Activated T-helper 1 cell treated with anti-CD3 and anti-CD28 coated beads, Interleukin-12 subunit alpha, Interleukin-12 subunit beta, Interleukin-2, Interleukin-4 antibody, amounts not matched to agents 30 ng/mL and 10 ng/mL and 1 ng/mL, durations not matched to agents 14 hours and 24 hours and 36 hours (primary cell): ENCODE measurements at regions of chr6 and their contacts with region 1.

Region 1: GRCh38 chr6:132530293-132530974 is 7.6 kb upstream of the TAAR9 start:
- DNase-seq: peak; percentile 45
- H3K4me3 Mint-ChIP-seq: no peak overlapping the region
- H3K27ac Mint-ChIP-seq: no peak overlapping the region
- H3K4me1 Mint-ChIP-seq: no peaks in the 10 kb centered on the region
- H3K27me3 Mint-ChIP-seq: peaks cover 29% of the 10 kb centered on the region

Region 2: GRCh38 chr6:132669690-132670291 is 139.4 kb after region 1 on chr6:
- intact Hi-C with region 1: loop called (anchors 5 kb)
- DNase-seq: no peak
- H3K4me3 Mint-ChIP-seq: no peak overlapping the region
- H3K27ac Mint-ChIP-seq: no peak overlapping the region
- H3K4me1 Mint-ChIP-seq: peaks cover 7% of the 10 kb centered on the region
- H3K27me3 Mint-ChIP-seq: peaks cover 5% of the 10 kb centered on the region

Region 3: GRCh38 chr6:132768051-132768517 is 237.7 kb after region 1 on chr6:
- intact Hi-C with region 1: loop called (anchors 1 kb)
- DNase-seq: no peak
- H3K4me3 Mint-ChIP-seq: no peak overlapping the region
- H3K27ac Mint-ChIP-seq: no peak overlapping the region
- H3K4me1 Mint-ChIP-seq: peaks cover 16% of the 10 kb centered on the region
- H3K27me3 Mint-ChIP-seq: no peaks in the 10 kb centered on the region

Region 4: GRCh38 chr6:132798869-132799538 is 268.6 kb after region 1 on chr6:
- intact Hi-C with region 1: loop called (anchors 1 kb)
- DNase-seq: peak; percentile 46
- H3K4me3 Mint-ChIP-seq: no peak overlapping the region
- H3K27ac Mint-ChIP-seq: peak overlapping the region; percentile 80
- H3K4me1 Mint-ChIP-seq: peaks cover 10% of the 10 kb centered on the region
- H3K27me3 Mint-ChIP-seq: peaks cover 8% of the 10 kb centered on the region

Region 5: DNA sequence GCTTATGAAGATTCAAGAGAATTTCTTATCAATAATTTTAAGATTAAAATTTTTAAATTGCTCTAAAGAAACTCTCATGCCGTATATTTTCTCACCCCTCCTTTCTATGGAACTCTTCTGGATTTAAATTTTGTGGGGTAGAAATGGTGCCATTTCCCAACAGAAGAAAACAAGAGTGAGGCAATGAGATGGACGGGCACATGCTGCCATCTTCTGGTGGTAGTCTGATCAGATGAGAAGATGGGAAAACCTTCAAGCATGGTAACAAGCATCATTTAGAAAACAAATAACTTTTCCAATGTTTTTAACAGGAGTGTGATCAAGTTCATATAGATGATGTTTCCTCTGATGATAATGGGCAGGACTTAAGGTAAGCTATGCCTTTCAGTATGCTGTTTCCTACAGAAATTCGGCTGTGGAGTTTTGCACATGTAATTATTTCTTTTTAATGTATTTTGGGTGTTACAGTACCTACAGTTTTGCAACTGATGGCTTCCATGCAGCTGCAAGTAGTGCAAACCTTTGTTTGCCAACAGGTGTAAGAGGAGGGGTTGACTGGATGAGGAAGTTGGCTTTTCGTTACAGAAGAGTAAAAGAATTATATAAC is 982.1 kb after region 1 on chr6:
- intact Hi-C with region 1: loop called (anchors 2 kb)
- DNase-seq: no peak
- H3K4me3 Mint-ChIP-seq: no peak overlapping the region
- H3K27ac Mint-ChIP-seq: no peak overlapping the region
- H3K4me1 Mint-ChIP-seq: no peaks in the 10 kb centered on the region
- H3K27me3 Mint-ChIP-seq: no peaks in the 10 kb centered on the region

Region 6: GRCh38 chr6:133553652-133554051 is 1023.2 kb after region 1 on chr6:
- intact Hi-C with region 1: loop called (anchors 1 kb)
- DNase-seq: no peak
- H3K4me3 Mint-ChIP-seq: no peak overlapping the region
- H3K27ac Mint-ChIP-seq: no peak overlapping the region
- H3K4me1 Mint-ChIP-seq: no peaks in the 10 kb centered on the region
- H3K27me3 Mint-ChIP-seq: peaks cover 7% of the 10 kb centered on the region